ENCODE measurements at regions of chr10 and their contacts with region 1.

Region 1: DNA sequence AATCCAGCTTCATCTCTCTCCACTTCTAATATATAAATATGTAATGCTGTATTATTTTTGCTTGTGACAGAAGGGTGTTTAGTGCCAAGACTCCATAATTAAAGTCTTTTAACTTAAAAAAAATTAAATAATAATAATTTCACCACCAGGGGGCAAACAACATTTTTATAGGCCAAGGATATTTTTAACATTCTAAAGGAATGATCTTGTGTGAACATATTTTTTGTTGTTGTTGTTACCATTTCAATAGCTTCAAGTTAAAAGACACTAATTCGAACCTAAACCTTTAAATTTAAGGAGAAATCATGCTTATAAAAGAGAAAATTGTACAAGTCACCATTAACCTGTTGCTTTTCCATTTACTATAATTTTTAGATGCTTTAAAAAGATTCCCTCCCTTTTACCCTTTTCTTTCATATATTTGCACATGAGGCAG is 7.5 kb upstream of the DNAJC1 start:
- DNase-seq: peak in 6 of 9 donors; percentile 21 to 52 (median 45)
- ATAC-seq: no peak
- H3K4me3 ChIP-seq: no peak overlapping the region
- H3K4me3 Mint-ChIP-seq: no peak overlapping the region
- H3K27ac ChIP-seq: no peak overlapping the region
- H3K27ac Mint-ChIP-seq: no peak overlapping the region
- H3K4me1 ChIP-seq: no peaks in the 10 kb centered on the region
- H3K4me1 Mint-ChIP-seq: peaks cover 0 to 6% (median 0%) of the 10 kb centered on the region in 7 donors
- H3K27me3 ChIP-seq: no peaks in the 10 kb centered on the region
- H3K27me3 Mint-ChIP-seq: peaks cover 0 to 23% (median 5%) of the 10 kb centered on the region in 5 donors

Region 2: DNA sequence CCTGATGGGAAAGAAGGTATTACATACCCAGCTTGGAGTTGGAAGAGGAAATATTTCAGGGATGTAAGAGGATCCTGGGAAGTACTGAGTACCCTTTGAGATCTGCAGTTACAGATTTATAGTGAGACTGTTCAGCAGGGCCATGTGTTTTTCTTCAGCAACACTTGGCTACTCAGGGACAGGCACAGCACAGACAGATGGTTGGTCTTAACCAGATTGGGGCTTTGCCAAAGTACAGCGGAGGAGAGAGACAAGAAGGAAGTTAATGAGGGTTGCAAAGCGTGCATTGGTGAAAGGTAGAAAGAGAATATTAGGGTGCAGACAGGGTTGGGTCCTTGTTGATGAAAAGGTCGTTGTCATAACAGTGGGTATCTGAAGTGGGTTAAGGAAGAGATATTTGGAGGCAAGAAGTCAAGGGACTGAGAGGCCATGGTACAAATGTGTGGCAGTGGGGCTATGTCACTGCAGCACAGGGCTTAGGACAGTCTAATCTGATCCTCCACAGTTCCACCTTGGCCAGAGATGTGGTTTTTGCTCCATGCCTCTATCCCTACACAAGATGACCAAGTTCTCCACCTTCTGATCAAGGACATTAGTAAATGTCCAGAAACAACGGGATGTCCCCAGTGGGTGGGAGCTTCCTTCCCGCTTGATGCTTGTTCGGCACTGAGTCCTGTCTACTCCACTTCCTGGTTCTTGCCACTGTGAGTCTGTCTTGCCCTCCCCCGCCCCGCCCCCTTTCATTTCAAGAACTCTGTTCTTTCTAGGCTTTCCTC is 11.5 kb after region 1 on chr10:
- CTCF ChIA-PET with region 1: interaction called, 4 read pairs
- POLR2A ChIA-PET with region 1: no interaction called
- intact Hi-C with region 1: loop called in 1 of 2 experiments (anchors 1 kb)
- DNase-seq: peak in 8 of 9 donors; percentile 27 to 71 (median 63)
- ATAC-seq: peak; percentile 93
- H3K4me3 ChIP-seq: peak overlapping the region; percentile 46
- H3K4me3 Mint-ChIP-seq: peak overlapping the region; percentile 28 to 89 (median 84)
- H3K27ac ChIP-seq: peak overlapping the region; percentile 75
- H3K27ac Mint-ChIP-seq: peak overlapping the region; percentile 85 to 99 (median 94)
- H3K4me1 ChIP-seq: peaks cover 4 to 19% of the 10 kb centered on the region in 2 donors
- H3K4me1 Mint-ChIP-seq: peaks cover 14 to 31% (median 21%) of the 10 kb centered on the region in 7 donors
- H3K27me3 ChIP-seq: no peaks in the 10 kb centered on the region
- H3K27me3 Mint-ChIP-seq: peaks cover 0 to 8% (median 0%) of the 10 kb centered on the region in 5 donors

Region 3: DNA sequence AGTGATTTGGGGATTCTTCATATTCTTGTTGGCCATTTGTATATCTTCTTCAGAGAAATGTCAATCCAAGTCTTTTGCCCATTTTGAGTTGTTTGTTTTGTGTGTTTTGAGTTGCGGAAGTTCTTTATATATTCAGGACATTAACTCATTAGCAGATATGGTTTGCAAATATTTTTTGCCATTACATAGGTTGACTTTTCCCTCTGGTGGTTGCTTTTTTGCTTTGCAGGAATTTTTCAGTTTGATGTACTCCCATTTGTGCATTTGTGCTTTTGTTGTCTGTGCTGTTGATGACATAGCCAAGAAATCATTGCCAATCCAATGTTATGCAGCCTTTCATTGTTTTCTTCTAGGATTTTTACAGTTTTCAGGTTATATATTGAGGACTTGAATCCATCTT is 56.1 kb after region 1 on chr10:
- CTCF ChIA-PET with region 1: no interaction called
- POLR2A ChIA-PET with region 1: no interaction called
- intact Hi-C with region 1: loop called in 1 of 2 experiments (anchors 2 kb)
- DNase-seq: no peak
- ATAC-seq: no peak
- H3K4me3 ChIP-seq: no peak overlapping the region
- H3K4me3 Mint-ChIP-seq: no peak overlapping the region
- H3K27ac ChIP-seq: no peak overlapping the region
- H3K27ac Mint-ChIP-seq: no peak overlapping the region
- H3K4me1 ChIP-seq: no peaks in the 10 kb centered on the region
- H3K4me1 Mint-ChIP-seq: no peaks in the 10 kb centered on the region
- H3K27me3 ChIP-seq: no peaks in the 10 kb centered on the region
- H3K27me3 Mint-ChIP-seq: peaks cover 0 to 8% (median 4%) of the 10 kb centered on the region in 5 donors

Region 4: DNA sequence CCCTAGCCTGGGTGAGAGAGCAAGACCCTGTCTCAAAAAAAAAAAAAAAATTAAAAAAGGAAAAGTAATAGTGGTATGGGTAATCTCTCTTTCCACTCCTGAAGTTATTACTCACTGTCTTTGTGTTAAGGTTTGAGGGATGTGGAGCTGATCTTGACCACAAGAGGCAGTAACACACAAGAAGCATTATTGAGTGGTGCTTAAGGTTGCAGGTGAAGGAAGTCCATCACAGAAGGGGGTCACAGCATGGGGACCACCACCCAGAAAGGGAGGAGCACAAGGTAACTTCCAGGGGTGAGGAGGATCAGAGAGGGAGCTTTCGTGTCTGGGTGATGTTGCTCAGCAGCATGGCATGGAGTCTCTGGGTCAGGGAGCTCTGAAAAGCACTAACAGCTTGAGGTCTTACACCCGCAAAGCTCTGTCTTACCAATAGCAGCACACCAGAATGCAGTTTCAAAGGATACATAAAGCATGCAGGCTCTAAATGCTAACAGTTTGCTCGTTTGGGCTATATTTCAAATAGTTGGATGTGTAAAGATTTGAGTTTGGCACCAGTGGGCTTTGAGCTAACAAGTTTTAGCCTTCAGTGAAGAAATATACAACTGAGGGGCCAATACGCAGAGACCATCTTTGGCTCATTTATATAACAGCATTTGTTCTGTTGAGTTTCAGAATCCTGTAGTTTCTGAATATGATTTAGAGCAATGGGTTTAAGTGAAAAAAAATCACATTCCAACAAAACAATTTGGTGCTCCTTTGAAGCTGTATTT is 92.9 kb after region 1 on chr10:
- CTCF ChIA-PET with region 1: interaction called, 3 read pairs
- POLR2A ChIA-PET with region 1: no interaction called
- intact Hi-C with region 1: loop called in 1 of 2 experiments (anchors 1 kb)
- DNase-seq: peak in 5 of 9 donors; percentile 2 to 14 (median 10)
- ATAC-seq: peak; percentile 45
- H3K4me3 ChIP-seq: no peak overlapping the region
- H3K4me3 Mint-ChIP-seq: no peak overlapping the region
- H3K27ac ChIP-seq: no peak overlapping the region
- H3K27ac Mint-ChIP-seq: no peak overlapping the region
- H3K4me1 ChIP-seq: no peaks in the 10 kb centered on the region
- H3K4me1 Mint-ChIP-seq: peaks cover 0 to 3% (median 0%) of the 10 kb centered on the region in 7 donors
- H3K27me3 ChIP-seq: no peaks in the 10 kb centered on the region
- H3K27me3 Mint-ChIP-seq: peaks cover 0 to 3% (median 0%) of the 10 kb centered on the region in 5 donors

Region 5: DNA sequence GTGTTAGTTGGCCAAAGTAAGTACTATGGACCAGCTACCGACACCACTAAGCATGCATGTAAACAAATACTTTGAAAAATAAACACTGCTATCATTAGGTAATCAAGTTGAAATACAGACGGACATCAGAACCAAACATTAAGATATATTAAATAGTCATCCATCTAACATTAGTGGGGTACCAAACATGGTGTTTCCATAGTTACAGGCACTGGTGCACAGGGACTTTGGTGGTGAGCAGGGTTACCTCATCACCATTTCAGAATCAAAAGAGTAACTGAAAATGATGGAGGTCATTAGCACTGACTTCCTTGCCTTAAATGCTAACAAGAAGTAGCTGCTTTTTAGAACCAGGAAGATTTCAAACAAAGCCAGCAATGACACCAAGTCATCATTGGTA is 183.0 kb after region 1 on chr10:
- CTCF ChIA-PET with region 1: interaction called, 3 read pairs
- POLR2A ChIA-PET with region 1: interaction called, 3 read pairs
- intact Hi-C with region 1: loop called in 1 of 2 experiments (anchors 1 kb)
- DNase-seq: no peak
- ATAC-seq: no peak
- H3K4me3 ChIP-seq: no peak overlapping the region
- H3K4me3 Mint-ChIP-seq: no peak overlapping the region
- H3K27ac ChIP-seq: no peak overlapping the region
- H3K27ac Mint-ChIP-seq: no peak overlapping the region
- H3K4me1 ChIP-seq: no peaks in the 10 kb centered on the region
- H3K4me1 Mint-ChIP-seq: no peaks in the 10 kb centered on the region
- H3K27me3 ChIP-seq: no peaks in the 10 kb centered on the region
- H3K27me3 Mint-ChIP-seq: peaks cover 0 to 13% (median 3%) of the 10 kb centered on the region in 5 donors

Region 6: GRCh38 chr10:22420787-22421517 is 410.0 kb after region 1 on chr10:
- CTCF ChIA-PET with region 1: no interaction called
- POLR2A ChIA-PET with region 1: no interaction called
- intact Hi-C with region 1: loop called in 1 of 2 experiments (anchors 1 kb)
- DNase-seq: peak in 4 of 9 donors; percentile 15 to 41 (median 40)
- ATAC-seq: peak; percentile 54
- H3K4me3 ChIP-seq: no peak overlapping the region
- H3K4me3 Mint-ChIP-seq: no peak overlapping the region
- H3K27ac ChIP-seq: no peak overlapping the region
- H3K27ac Mint-ChIP-seq: no peak overlapping the region
- H3K4me1 ChIP-seq: no peaks in the 10 kb centered on the region
- H3K4me1 Mint-ChIP-seq: peaks cover 0 to 3% (median 0%) of the 10 kb centered on the region in 7 donors
- H3K27me3 ChIP-seq: no peaks in the 10 kb centered on the region
- H3K27me3 Mint-ChIP-seq: peaks cover 0 to 4% (median 0%) of the 10 kb centered on the region in 5 donors

Region 7: GRCh38 chr10:22704471-22704911 is 693.5 kb after region 1 on chr10:
- CTCF ChIA-PET with region 1: no interaction called
- POLR2A ChIA-PET with region 1: no interaction called
- intact Hi-C with region 1: no loop called
- DNase-seq: no peak
- ATAC-seq: peak; percentile 33
- H3K4me3 ChIP-seq: no peak overlapping the region
- H3K4me3 Mint-ChIP-seq: peak overlapping the region in 9 of 10 donors; percentile 14 to 70 (median 60)
- H3K27ac ChIP-seq: peak overlapping the region; percentile 30
- H3K27ac Mint-ChIP-seq: peak overlapping the region in 8 of 9 donors; percentile 29 to 92 (median 82)
- H3K4me1 ChIP-seq: peaks cover 59 to 93% of the 10 kb centered on the region in 2 donors
- H3K4me1 Mint-ChIP-seq: peaks cover 80 to 100% (median 99%) of the 10 kb centered on the region in 7 donors
- H3K27me3 ChIP-seq: no peaks in the 10 kb centered on the region
- H3K27me3 Mint-ChIP-seq: no peaks in the 10 kb centered on the region

Region 8: GRCh38 chr10:23067939-23068775 is 1057.2 kb after region 1 on chr10:
- CTCF ChIA-PET with region 1: no interaction called
- POLR2A ChIA-PET with region 1: no interaction called
- intact Hi-C with region 1: loop called in 1 of 2 experiments (anchors 1 kb)
- DNase-seq: peak; percentile 23 to 66 (median 48)
- ATAC-seq: peak; percentile 78
- H3K4me3 ChIP-seq: no peak overlapping the region
- H3K4me3 Mint-ChIP-seq: no peak overlapping the region
- H3K27ac ChIP-seq: no peak overlapping the region
- H3K27ac Mint-ChIP-seq: no peak overlapping the region
- H3K4me1 ChIP-seq: no peaks in the 10 kb centered on the region
- H3K4me1 Mint-ChIP-seq: peaks cover 0 to 2% (median 0%) of the 10 kb centered on the region in 7 donors
- H3K27me3 ChIP-seq: no peaks in the 10 kb centered on the region
- H3K27me3 Mint-ChIP-seq: peaks cover 0 to 6% (median 2%) of the 10 kb centered on the region in 5 donors